ENCODE measurements at regions of chr14 and their contacts with region 1.

Region 1: GRCh38 chr14:52117111-52117832 is 48.4 kb upstream of the NID2 start:
- DNase-seq: no peak
- ATAC-seq: no peak

Region 2: GRCh38 chr14:52080817-52081755 is 36.2 kb before region 1 on chr14:
- intact Hi-C with region 1: loop called (anchors 5 to 10 kb)
- DNase-seq: no peak
- ATAC-seq: peak; percentile 70 to 85

Region 3: DNA sequence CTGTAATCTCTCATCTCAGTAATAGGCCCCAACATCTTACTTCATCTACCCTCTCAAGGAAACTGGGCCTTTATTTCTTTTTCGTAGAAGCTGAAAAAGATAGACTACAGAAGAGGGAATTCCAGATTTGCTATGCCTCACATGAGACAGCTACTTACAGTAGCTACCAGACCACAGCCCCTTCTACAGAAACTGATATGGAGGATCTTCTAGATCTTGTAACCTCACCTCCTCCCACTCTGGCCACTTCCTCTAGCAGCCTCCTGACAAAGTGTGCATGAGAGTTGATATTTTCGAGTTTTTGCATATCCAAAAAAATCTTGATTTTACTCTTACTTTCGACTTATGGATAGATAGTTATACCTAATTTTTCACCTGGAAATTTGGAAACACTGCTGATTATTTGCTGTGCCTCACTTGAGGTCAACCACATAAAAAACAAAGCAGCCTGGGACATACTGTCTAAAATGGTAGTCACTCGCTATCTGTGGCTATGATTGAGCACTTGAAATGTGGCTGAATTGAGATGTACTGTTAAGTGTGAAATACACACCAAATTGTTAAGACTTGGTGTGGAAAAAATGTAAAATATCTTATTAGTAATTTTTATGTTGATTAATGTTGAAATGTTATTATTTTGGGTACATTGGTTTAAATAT is 37.8 kb after region 1 on chr14:
- intact Hi-C with region 1: no loop called
- DNase-seq: no peak
- ATAC-seq: no peak